CD4-positive, alpha-beta memory T cell (primary cell): ENCODE measurements at regions of chr3 and their contacts with region 1.

Region 1: DNA sequence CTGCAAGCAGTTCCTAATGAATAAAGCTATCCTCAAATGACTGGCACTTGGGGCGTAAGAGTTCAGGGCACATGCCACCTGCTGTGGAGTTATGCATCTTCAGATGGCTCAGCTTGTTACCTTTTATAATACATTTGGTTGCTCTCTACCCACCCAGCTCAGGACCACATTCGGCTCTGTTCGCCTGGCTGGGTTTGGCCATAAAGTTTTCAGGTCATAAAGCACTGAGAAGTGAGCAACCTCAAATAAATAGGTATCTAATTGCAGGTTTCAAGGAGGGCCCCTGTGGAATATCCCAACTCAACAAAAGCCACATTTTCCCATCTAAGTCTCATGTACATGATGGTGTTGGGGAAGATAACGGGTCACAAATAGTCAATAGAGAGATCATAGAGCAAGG is 727.3 kb downstream of the GRM7 start:
- DNase-seq: no peak
- H3K4me3 ChIP-seq: no peak overlapping the region
- H3K4me3 Mint-ChIP-seq: no peak overlapping the region
- H3K27ac ChIP-seq: no peak overlapping the region
- H3K27ac Mint-ChIP-seq: no peak overlapping the region
- H3K4me1 ChIP-seq: no peaks in the 10 kb centered on the region
- H3K4me1 Mint-ChIP-seq: no peaks in the 10 kb centered on the region
- H3K27me3 ChIP-seq: no peaks in the 10 kb centered on the region
- H3K27me3 Mint-ChIP-seq: no peaks in the 10 kb centered on the region

Region 2: GRCh38 chr3:7621651-7622050 is 33.4 kb after region 1 on chr3:
- CTCF ChIA-PET with region 1: no interaction called
- POLR2A ChIA-PET with region 1: no interaction called
- intact Hi-C with region 1: loop called (anchors 1 kb)
- DNase-seq: no peak
- H3K4me3 ChIP-seq: no peak overlapping the region
- H3K4me3 Mint-ChIP-seq: no peak overlapping the region
- H3K27ac ChIP-seq: no peak overlapping the region
- H3K27ac Mint-ChIP-seq: no peak overlapping the region
- H3K4me1 ChIP-seq: no peaks in the 10 kb centered on the region
- H3K4me1 Mint-ChIP-seq: no peaks in the 10 kb centered on the region
- H3K27me3 ChIP-seq: no peaks in the 10 kb centered on the region
- H3K27me3 Mint-ChIP-seq: no peaks in the 10 kb centered on the region